ENCODE measurements at regions of chr2 and their contacts with region 1.

Region 1: GRCh38 chr2:241029599-241030332 is 31.3 kb downstream of the SNED1 start:
- DNase-seq: no peak
- H3K4me3 ChIP-seq: no peak overlapping the region
- H3K27ac ChIP-seq: no peak overlapping the region
- H3K4me1 ChIP-seq: no peaks in the 10 kb centered on the region
- H3K27me3 ChIP-seq: no peaks in the 10 kb centered on the region
- CTCF ChIP-seq: no peak
- EP300 ChIP-seq: no peak
- POLR2A ChIP-seq: no peak

Region 2: DNA sequence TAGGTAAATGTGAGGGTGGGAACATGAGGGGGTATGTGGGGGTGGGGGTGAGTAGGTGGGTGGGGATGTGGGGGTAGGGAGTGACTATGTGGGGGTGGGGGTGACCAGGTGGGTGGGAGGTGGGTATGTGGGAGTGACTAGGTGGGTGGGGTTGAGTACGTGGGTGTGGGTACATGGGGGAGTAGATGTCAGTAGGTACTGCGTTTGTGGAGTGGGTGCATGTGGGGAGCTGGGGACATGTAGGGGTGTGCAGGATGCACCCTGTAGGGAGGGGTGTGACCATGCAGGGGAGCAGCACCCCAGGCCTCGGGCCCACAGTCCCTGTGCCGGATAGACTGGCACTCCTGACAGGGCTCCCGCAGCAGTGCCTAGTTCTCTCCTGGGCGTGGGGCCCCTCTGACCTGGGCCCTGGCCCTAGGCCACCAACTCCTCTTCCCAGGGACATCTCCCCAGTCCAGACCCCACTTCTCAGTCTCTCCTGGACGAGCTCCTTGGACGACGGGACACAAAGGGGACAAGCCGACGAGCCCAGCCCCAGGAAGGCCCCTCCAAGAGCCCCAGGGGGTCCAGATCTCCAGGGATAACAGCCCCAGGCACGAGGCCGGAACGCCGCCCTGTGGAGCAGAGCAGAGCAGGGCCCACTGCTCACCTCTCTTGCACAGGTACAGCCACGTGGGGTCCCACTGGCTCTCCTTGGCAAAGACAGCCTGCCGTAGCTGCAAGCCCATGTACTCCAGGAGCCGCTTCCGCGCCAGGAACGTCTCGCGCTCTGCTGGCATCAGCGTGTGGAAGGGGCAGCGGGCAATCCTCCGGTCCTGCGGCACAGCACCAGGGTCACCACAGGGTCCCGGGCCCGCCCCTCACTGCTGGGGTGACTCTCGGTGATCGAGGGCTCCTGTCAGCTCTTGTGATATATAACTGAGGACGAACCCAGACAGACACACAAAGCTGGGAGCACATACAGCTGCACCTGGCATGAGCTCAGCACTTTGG is 530.2 kb before region 1 on chr2:
- in situ Hi-C with region 1: no loop called
- intact Hi-C with region 1: loop called (anchors 5 kb)
- DNase-seq: no peak
- H3K4me3 ChIP-seq: no peak overlapping the region
- H3K27ac ChIP-seq: no peak overlapping the region
- H3K4me1 ChIP-seq: no peaks in the 10 kb centered on the region
- H3K27me3 ChIP-seq: no peaks in the 10 kb centered on the region
- CTCF ChIP-seq: no peak
- EP300 ChIP-seq: no peak
- POLR2A ChIP-seq: no peak

Measured in transverse colon (tissue), 4 donors.